PC-9 (cell line): ENCODE measurements at regions of chr7 and their contacts with region 1.

Region 1: GRCh38 chr7:34087892-34088891 is 182.9 kb downstream of the BMPER start:
- DNase-seq: peak in 1 of 2 experiments; percentile 21
- H3K4me3 ChIP-seq: no peak overlapping the region
- H3K27ac ChIP-seq: no peak overlapping the region
- H3K4me1 ChIP-seq: no peaks in the 10 kb centered on the region
- H3K27me3 ChIP-seq: no peaks in the 10 kb centered on the region
- CTCF ChIP-seq: peak; percentile 69

Region 2: DNA sequence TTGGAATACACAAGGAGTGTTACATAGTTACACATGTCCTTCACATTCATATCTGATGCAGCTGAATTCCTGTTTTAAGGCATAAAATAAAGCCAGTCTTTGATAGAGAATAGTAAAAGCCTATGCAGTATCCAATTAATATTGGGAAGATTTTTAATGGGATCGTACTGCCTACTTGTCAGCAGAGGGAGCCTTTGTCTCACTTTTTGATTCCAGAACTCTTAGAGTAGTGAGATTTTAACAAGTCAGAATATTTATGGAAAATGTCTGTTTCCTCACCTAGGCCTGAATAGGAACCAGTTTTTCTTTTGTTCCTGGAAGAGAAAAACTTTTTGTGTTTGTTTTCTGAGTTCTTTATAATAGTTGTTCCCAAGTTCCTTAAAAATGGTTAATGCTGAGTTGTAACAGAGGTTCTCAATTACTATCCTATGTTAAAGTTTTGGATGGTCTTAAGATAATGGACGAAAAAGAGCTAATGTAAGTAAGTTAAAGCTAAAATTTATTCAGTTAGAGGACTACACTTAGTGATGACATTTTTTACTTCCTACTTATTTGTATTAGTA is 844.8 kb before region 1 on chr7:
- CTCF ChIA-PET with region 1: interaction called, 3 read pairs
- POLR2A ChIA-PET with region 1: no interaction called
- intact Hi-C with region 1: loop called (anchors 1 kb)
- DNase-seq: peak in 1 of 2 experiments; percentile 47
- H3K4me3 ChIP-seq: no peak overlapping the region
- H3K27ac ChIP-seq: no peak overlapping the region
- H3K4me1 ChIP-seq: no peaks in the 10 kb centered on the region
- H3K27me3 ChIP-seq: no peaks in the 10 kb centered on the region
- CTCF ChIP-seq: peak; percentile 91

Region 3: DNA sequence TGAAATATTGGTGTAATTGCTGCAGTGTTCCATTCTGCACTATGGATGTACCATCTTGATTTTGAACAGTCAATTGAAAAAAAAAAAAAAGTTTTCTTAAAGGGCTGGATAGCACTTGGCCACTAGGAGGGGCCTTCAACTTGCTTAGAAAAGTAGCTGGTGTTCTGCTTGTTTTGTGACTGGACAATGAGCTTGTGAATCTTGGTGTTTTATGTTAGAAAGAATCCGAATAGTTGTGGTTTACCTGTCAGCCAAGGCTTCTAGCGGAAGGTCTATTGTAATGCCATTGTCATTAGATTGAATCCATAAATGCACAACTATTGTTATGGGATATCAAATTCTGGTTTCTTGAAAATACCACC is 105.8 kb before region 1 on chr7:
- CTCF ChIA-PET with region 1: interaction called, 11 read pairs
- POLR2A ChIA-PET with region 1: no interaction called
- intact Hi-C with region 1: loop called (anchors 1 kb)
- DNase-seq: no peak
- H3K4me3 ChIP-seq: no peak overlapping the region
- H3K27ac ChIP-seq: no peak overlapping the region
- H3K4me1 ChIP-seq: peaks cover under 1% of the 10 kb centered on the region
- H3K27me3 ChIP-seq: no peaks in the 10 kb centered on the region
- CTCF ChIP-seq: 0 out of 2 replicates have a peak, but pooled peaks have one; percentile 32

Region 4: DNA sequence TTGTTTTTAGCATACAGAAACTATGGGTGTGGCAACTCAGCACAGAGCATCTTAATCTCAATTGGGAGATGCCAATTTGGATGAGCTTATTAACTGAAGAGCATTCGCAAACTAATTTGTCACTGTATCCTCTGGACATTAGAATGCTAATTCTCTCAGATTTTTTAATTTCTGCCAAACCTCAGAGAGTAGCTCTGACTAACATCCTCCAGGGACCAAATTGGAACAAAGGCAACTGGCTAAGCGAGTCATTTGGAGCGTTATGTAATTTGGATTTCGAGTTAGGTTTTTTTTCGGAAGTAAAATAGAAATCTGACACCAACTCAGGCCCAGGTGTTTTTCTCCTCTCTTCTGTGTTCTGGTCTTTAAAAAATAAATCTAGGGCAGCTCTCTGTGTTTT is 19.1 kb after region 1 on chr7:
- CTCF ChIA-PET with region 1: no interaction called
- POLR2A ChIA-PET with region 1: no interaction called
- intact Hi-C with region 1: no loop called
- DNase-seq: no peak
- H3K4me3 ChIP-seq: no peak overlapping the region
- H3K27ac ChIP-seq: no peak overlapping the region
- H3K4me1 ChIP-seq: peaks cover 6% of the 10 kb centered on the region; the same call in 1 of the 2 replicates
- H3K27me3 ChIP-seq: 0 out of 2 replicates have a peak, but pooled peaks cover 8% of the 10 kb centered on the region
- CTCF ChIP-seq: no peak